Head of caudate nucleus (tissue), 42 donors: ENCODE measurements at regions of chr19 and their contacts with region 1.

Region 1: GRCh38 chr19:10332955-10333757 is at the start of gene RAVER1:
- DNase-seq: peak; percentile 96 to 99 (median 98)

Region 2: DNA sequence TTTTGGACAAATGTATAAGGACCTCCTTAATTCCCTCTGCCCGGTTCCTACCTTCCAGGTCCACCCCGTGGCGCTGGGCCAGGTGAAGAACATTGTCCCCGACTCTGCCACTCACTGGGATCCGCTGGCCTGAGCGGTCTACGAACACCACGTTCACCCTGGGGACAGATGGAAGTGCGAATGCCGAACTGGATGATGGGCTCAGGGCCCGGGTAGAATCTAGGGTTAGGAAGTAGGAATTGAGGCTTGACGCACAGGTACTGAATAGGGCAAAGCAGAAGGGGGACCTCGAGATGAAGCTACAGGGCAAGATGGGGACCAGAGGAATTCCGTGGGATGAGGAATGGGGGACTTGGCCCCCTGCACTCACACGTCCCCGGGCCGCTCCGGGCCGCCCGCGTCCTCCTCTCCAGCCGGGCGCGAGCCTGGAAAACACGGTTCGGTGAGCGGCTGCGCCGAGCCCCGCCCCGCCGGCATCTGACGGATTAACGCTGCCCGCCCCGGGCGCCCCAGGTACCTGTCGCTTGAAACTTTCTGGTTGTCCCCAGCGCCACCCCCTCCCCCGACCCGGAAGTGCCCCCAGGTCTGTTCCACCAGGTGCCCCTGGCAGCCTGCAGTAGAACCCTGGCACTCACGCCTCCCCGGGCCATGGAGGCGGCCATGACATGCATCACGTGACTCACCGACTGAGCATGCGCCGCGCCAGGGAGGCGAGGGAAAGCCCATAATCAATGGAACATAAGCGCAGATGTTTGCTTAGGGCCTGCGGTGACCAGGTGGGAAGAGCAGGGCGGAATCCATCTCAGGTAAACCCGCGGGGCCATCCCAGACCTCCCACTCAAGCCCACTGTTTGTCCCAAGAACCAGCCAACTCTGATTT is 17.6 kb before region 1 on chr19 and contains the start of gene FDX2:
- intact Hi-C with region 1: loop called (anchors 2 kb)
- DNase-seq: peak; percentile 82 to 97 (median 93)

Region 3: GRCh38 chr19:10380313-10381102 is 47.4 kb after region 1 on chr19 and contains the start of gene TYK2:
- intact Hi-C with region 1: loop called (anchors 10 kb)
- DNase-seq: peak; percentile 94 to 99 (median 98)

Region 4: DNA sequence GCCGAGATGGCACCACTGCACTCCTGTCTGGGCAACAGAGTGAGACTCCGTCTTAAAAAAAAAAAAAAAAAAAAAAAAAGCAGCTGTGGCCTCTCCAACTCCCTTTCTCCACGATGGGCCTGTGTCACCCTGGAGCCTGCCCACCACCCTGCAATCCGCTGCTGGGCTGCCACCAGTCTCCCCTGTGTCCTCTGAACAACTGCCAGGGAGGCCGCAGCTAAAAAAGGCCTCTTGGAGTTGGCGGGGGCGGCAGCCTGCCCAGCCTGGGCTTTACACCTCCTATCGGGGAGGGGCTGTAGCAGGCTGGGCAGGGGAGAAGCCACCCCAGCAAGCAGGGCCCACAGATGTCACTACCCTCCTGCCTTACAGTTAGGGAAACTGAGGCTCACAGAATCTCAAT is 66.7 kb after region 1 on chr19:
- intact Hi-C with region 1: no loop called
- DNase-seq: no peak